ENCODE measurements at regions of chr16 and their contacts with region 1.

Region 1: DNA sequence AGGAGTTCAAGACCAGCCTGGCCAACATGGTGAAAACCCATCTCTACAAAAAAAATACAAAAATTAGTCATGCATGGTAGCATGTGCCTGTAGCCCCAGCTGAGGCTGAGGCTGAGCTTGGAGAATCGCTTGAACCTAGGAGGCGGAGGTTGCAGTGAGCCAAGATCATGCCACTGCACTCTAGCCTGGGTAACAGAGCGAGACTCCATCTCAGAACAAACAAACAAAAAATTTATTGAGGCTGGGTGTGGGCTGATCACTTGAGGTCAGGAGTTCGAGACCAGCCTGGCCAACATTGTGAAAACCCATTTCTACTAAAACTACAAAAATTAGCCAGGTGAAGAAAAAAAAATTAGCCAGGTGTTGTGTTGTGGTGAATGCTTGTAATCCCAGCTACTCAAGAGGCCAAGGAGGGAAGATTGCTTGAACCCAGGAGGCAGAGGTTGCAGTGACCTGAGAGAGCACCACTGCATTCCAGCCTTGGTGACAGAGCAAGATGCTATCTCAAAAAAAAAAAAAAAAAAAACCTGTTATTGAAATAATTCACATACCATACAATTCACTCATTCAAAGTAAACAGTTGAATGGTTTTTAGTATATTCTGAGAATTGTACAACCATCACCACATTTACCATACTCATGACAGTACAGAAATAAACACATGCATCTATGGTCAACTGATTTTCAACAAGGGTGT is 30.9 kb downstream of the ZNRF1 start:
- DNase-seq: peak; percentile 84
- ATAC-seq: peak; percentile 61
- H3K4me3 ChIP-seq: no peak overlapping the region
- H3K27ac ChIP-seq: no peak overlapping the region
- H3K4me1 ChIP-seq: peaks cover 20% of the 10 kb centered on the region
- H3K27me3 ChIP-seq: no peaks in the 10 kb centered on the region
- CTCF ChIP-seq: no peak
- POLR2A ChIP-seq: no peak
- RAD21 ChIP-seq: no peak; the same call in 1 of the 2 replicates

Region 2: GRCh38 chr16:74998481-74999218 is 31.1 kb before region 1 on chr16 and contains the start of gene ZNRF1:
- CTCF ChIA-PET with region 1: interaction called, 5 read pairs
- POLR2A ChIA-PET with region 1: no interaction called
- dilution Hi-C with region 1: no loop called
- in situ Hi-C with region 1: no loop called
- intact Hi-C with region 1: loop called (anchors 2 kb)
- DNase-seq: peak; percentile 71
- ATAC-seq: peak; percentile 91
- H3K4me3 ChIP-seq: peak within 1 kb of the TSS; percentile 79
- H3K27ac ChIP-seq: peak within 1 kb of the TSS; percentile 62
- H3K4me1 ChIP-seq: peaks cover 10% of the 10 kb centered on the region
- H3K27me3 ChIP-seq: no peaks in the 10 kb centered on the region
- CTCF ChIP-seq: peak; percentile 73
- POLR2A ChIP-seq: 0 out of 2 replicates have a peak, but pooled peaks have one; percentile 10
- RAD21 ChIP-seq: peak; percentile 80
- total RNA-seq, gene ZNRF1: 8.2 and 9.7 TPM in 2 replicates

Region 3: GRCh38 chr16:75087375-75087979 is 57.8 kb after region 1 on chr16:
- CTCF ChIA-PET with region 1: no interaction called
- POLR2A ChIA-PET with region 1: no interaction called
- dilution Hi-C with region 1: no loop called
- in situ Hi-C with region 1: no loop called
- intact Hi-C with region 1: loop called (anchors 5 kb)
- DNase-seq: peak; percentile 93
- ATAC-seq: peak; percentile 89
- H3K4me3 ChIP-seq: peak overlapping the region; percentile 21
- H3K27ac ChIP-seq: peak overlapping the region; percentile 91
- H3K4me1 ChIP-seq: peaks cover 22% of the 10 kb centered on the region
- H3K27me3 ChIP-seq: no peaks in the 10 kb centered on the region
- CTCF ChIP-seq: no peak
- POLR2A ChIP-seq: no peak
- RAD21 ChIP-seq: no peak

Region 4: DNA sequence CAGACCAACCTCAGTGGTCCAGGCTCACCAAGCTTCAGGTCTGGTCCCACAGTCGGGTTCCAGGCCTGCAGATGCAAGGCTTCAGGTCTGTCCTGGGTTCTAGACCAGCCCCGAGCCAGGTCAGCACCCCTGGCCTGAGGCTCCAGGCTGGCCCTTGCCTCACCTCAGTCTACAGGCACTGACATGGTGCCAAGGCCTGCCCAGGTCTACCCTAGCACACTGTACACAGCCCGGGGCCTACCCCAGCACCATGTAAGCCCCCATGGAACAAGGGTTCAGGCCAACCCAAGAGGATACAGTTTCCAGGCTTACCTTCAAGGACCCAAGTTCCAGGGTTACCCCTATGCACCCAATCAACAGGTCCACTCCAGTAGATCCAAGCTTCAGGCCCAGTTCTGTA is 145.4 kb after region 1 on chr16:
- CTCF ChIA-PET with region 1: no interaction called
- POLR2A ChIA-PET with region 1: no interaction called
- dilution Hi-C with region 1: no loop called
- in situ Hi-C with region 1: no loop called
- intact Hi-C with region 1: no loop called
- DNase-seq: no peak
- ATAC-seq: no peak
- H3K4me3 ChIP-seq: no peak overlapping the region
- H3K27ac ChIP-seq: no peak overlapping the region
- H3K4me1 ChIP-seq: no peaks in the 10 kb centered on the region
- H3K27me3 ChIP-seq: no peaks in the 10 kb centered on the region
- CTCF ChIP-seq: no peak
- POLR2A ChIP-seq: no peak
- RAD21 ChIP-seq: no peak